SK-N-SH (cell line): ENCODE measurements at regions of chr9 and their contacts with region 1.

Region 1: DNA sequence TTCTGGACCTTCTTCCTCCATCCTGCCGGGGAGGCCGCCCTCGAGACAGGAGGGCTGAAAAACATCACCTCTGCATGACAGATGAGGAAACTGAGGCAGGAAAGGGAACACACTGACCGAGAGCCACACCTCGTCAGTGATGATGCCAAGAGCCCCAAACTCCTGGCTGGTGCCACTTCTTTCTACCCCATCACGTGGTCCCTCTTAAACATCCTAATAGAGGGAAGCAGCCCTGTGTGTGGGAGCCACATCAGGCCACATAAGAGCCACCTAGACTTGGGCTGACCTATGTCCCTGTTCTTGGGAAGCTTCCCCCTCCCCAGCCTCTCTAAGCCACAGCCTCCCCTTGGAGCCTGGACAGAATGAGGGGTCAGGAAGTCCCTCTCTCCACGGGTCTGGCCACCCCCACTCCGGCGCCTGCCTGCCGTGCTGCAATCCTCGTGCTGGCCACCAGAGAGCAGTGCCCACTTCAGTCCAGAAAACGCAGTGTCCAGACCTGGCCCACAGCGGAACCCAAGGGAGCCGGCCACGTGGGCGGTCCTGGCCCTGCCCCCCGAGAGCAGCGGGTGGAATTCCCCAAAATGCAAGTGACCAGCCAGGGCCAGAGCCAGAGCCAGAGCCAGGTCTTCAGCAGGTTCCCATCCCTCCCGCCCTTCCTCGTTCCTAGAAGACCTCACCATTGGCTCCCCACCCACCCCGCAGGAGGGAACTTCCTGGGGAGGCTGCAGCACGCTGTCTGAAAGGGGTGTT is 54.7 kb upstream of the SARDH start:
- DNase-seq: peak; percentile 92
- H3K4me3 ChIP-seq: no peak overlapping the region
- H3K27ac ChIP-seq: no peak overlapping the region; a peak in 1 of 4 replicates
- H3K4me1 ChIP-seq: peaks cover 0 to 10% of the 10 kb centered on the region in 2 experiments; a peak in 2 of 4 replicates
- H3K27me3 ChIP-seq: no peaks in the 10 kb centered on the region
- CTCF ChIP-seq: peak; percentile 85
- EP300 ChIP-seq: no peak
- RAD21 ChIP-seq: peak; percentile 95

Region 2: GRCh38 chr9:133813749-133814585 is 21.1 kb after region 1 on chr9:
- CTCF ChIA-PET with region 1: interaction called, 25 read pairs
- POLR2A ChIA-PET with region 1: no interaction called
- DNase-seq: peak; percentile 85
- H3K4me3 ChIP-seq: no peak overlapping the region
- H3K27ac ChIP-seq: peak overlapping the region in 1 of 2 experiments; percentile 75; a peak in 2 of 4 replicates
- H3K4me1 ChIP-seq: peaks cover 0 to 23% of the 10 kb centered on the region in 2 experiments; a peak in 1 of 4 replicates
- H3K27me3 ChIP-seq: no peaks in the 10 kb centered on the region
- CTCF ChIP-seq: no peak
- EP300 ChIP-seq: 0 out of 4 replicates have a peak, but pooled peaks of 1 of the 2 experiments have one; percentile 56
- RAD21 ChIP-seq: no peak

Region 3: GRCh38 chr9:133830310-133830709 is 37.4 kb after region 1 on chr9:
- CTCF ChIA-PET with region 1: interaction called, 10 read pairs
- POLR2A ChIA-PET with region 1: no interaction called
- DNase-seq: no peak
- H3K4me3 ChIP-seq: no peak overlapping the region
- H3K27ac ChIP-seq: no peak overlapping the region
- H3K4me1 ChIP-seq: peaks cover 0 to 60% of the 10 kb centered on the region in 2 experiments; a peak in 3 of 4 replicates
- H3K27me3 ChIP-seq: no peaks in the 10 kb centered on the region
- CTCF ChIP-seq: no peak
- EP300 ChIP-seq: no peak
- RAD21 ChIP-seq: no peak

Region 4: GRCh38 chr9:133876144-133876543 is 83.2 kb after region 1 on chr9:
- CTCF ChIA-PET with region 1: interaction called, 17 read pairs
- POLR2A ChIA-PET with region 1: no interaction called
- DNase-seq: peak; percentile 62
- H3K4me3 ChIP-seq: no peak overlapping the region
- H3K27ac ChIP-seq: peak overlapping the region; percentile 96 to 99
- H3K4me1 ChIP-seq: peaks cover 26 to 98% of the 10 kb centered on the region in 2 experiments
- H3K27me3 ChIP-seq: no peaks in the 10 kb centered on the region
- CTCF ChIP-seq: peak; percentile 37; the same call in 1 of the 2 replicates
- EP300 ChIP-seq: no peak
- RAD21 ChIP-seq: no peak